RWPE1 (cell line): ENCODE measurements at regions of chr2 and their contacts with region 1.

Region 1: DNA sequence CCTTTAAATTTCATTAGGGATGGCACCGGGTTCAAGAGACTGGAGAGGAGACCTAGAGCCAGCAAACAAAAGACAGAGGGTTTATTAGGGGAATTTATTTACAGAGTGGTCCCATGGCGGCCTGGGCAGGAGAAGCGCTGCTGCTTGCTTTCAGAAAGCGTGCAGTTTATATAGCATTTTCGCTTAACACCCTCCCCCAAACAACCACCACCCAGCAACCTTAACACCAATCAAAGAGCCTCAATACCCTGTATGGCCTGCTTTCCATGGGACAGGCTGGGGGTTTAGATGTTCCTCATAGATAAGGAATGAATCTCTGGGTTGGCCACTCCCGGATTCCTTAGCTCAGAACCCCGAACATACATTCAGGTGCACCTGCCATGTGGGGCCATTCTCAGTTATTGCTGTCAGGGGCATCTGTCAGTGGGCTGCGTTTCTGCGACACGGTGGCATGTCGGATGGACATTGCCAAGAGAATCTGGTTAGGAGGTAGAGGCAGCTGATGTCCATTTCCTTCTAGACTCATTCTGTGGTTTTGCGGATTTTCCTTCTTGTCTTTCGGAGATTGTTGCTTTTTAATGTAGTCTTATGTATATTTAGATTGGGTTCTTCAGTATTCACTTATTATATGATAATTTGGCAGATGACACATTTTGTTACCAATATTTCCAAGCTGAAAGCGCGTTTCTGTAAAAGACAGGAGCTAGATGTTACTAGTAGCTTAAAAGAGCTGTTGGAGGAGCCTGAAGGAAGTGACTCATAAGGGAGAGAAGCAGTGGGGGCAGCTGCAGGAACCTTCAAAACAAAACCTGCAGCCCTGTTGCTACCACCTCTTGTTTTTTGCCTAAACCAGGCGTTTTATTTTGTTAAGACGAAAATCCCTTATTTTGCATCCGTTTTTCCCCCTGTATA is 7.2 kb downstream of the AGAP1 start:
- DNase-seq: peak; percentile 71
- H3K27ac ChIP-seq: peak overlapping the region; percentile 48; the same call in 1 of the 2 replicates
- CTCF ChIP-seq: no peak

Region 2: GRCh38 chr2:235406430-235406829 is 94.6 kb before region 1 on chr2:
- CTCF ChIA-PET with region 1: no interaction called
- POLR2A ChIA-PET with region 1: no interaction called
- DNase-seq: no peak
- H3K27ac ChIP-seq: no peak overlapping the region
- CTCF ChIP-seq: no peak

Region 3: DNA sequence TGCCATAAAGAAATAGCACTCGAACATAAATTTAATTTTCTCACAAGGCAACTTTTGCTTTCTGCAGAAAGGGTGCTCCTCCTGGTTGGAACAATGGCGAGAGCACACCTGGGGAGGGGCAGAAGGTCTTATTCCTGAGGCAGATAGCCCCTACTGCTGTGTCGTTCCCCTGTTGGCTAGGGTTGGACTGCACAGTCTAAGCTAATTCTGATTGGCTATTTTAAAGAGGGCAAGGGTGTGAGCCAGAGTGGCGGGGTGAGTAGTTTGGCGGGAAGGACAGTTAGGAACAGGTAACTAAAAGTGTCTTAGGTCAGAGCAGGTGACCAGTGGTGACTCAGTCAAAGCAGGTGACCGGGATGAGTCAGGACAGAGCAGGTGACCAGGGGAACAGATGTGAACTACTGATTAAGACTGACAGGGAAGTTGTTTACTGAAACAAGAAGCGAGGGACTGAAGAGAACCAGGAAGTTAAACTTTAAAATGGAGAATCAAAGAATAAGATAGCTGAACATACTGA is 56.9 kb before region 1 on chr2:
- CTCF ChIA-PET with region 1: interaction called, 11 read pairs
- POLR2A ChIA-PET with region 1: no interaction called
- DNase-seq: no peak
- H3K27ac ChIP-seq: no peak overlapping the region
- CTCF ChIP-seq: no peak